Aorta (tissue), 5 donors: ENCODE measurements at regions of chr20 and their contacts with region 1.

Region 1: DNA sequence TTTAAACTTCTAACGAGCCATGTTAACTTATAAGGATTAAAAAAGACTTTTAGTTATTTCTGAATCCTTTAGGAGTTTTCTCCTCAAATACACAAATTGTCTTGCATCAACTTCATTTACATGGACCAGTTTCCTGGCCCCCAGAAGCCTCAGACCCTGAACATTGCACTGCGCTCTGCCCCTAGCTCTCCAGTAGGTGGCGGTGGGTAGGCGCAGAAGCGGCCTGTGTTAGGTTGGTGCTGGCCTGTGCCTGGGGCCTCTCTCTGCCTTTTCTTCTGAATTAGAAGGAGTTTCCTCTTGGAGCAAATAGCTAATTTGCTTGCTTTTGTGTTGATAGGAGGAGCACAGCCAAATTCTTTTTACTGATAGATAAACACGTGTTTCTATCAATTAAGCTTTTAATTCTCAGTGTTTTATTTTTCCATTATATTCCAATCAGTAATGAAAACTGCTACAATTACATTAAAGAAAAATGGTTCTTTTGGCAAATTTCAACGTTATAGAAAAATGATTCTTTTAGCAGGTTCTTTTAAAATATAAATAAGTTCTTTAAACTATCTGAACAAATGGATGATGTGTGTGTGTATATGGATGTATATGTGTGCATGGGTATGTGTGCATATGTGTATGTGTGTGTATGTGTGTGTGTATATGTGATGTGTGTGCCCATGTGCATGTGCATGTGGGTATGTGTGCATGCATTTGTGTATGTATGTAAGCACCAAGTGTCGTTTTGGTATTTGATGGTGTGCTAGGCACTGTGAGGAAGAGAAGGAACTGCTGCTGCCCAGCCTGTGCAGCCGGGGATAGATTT is 44.5 kb downstream of the DTD1 start:
- DNase-seq: peak; percentile 73 to 81
- ATAC-seq: peak; percentile 88
- H3K4me3 ChIP-seq: no peak overlapping the region
- H3K27ac ChIP-seq: no peak overlapping the region
- H3K4me1 ChIP-seq: no peaks in the 10 kb centered on the region
- H3K27me3 ChIP-seq: no peaks in the 10 kb centered on the region

Region 2: GRCh38 chr20:18705490-18705889 is 73.1 kb after region 1 on chr20:
- intact Hi-C with region 1: no loop called
- DNase-seq: no peak
- ATAC-seq: no peak
- H3K4me3 ChIP-seq: no peak overlapping the region
- H3K27ac ChIP-seq: no peak overlapping the region
- H3K4me1 ChIP-seq: no peaks in the 10 kb centered on the region
- H3K27me3 ChIP-seq: no peaks in the 10 kb centered on the region

Region 3: GRCh38 chr20:18728165-18728869 is 95.9 kb after region 1 on chr20:
- intact Hi-C with region 1: no loop called
- DNase-seq: no peak
- ATAC-seq: no peak
- H3K4me3 ChIP-seq: no peak overlapping the region
- H3K27ac ChIP-seq: no peak overlapping the region
- H3K4me1 ChIP-seq: no peaks in the 10 kb centered on the region
- H3K27me3 ChIP-seq: no peaks in the 10 kb centered on the region

Region 4: GRCh38 chr20:18793625-18794427 is 161.4 kb after region 1 on chr20:
- intact Hi-C with region 1: loop called (anchors 10 kb)
- DNase-seq: peak; percentile 94 to 95
- ATAC-seq: peak; percentile 95
- H3K4me3 ChIP-seq: peak overlapping the region; percentile 41 to 79
- H3K27ac ChIP-seq: peak overlapping the region; percentile 52 to 69
- H3K4me1 ChIP-seq: peaks cover 4 to 5% of the 10 kb centered on the region in 2 donors
- H3K27me3 ChIP-seq: no peaks in the 10 kb centered on the region

Region 5: GRCh38 chr20:18904624-18905023 is 272.2 kb after region 1 on chr20:
- intact Hi-C with region 1: loop called in 1 of 2 experiments (anchors 10 kb)
- DNase-seq: no peak
- ATAC-seq: no peak
- H3K4me3 ChIP-seq: no peak overlapping the region
- H3K27ac ChIP-seq: no peak overlapping the region
- H3K4me1 ChIP-seq: no peaks in the 10 kb centered on the region
- H3K27me3 ChIP-seq: no peaks in the 10 kb centered on the region

Region 6: GRCh38 chr20:19193349-19193748 is 560.9 kb after region 1 on chr20:
- intact Hi-C with region 1: loop called in 1 of 2 experiments (anchors 5 kb)
- DNase-seq: no peak
- ATAC-seq: no peak
- H3K4me3 ChIP-seq: no peak overlapping the region
- H3K27ac ChIP-seq: no peak overlapping the region
- H3K4me1 ChIP-seq: no peaks in the 10 kb centered on the region
- H3K27me3 ChIP-seq: no peaks in the 10 kb centered on the region

Region 7: DNA sequence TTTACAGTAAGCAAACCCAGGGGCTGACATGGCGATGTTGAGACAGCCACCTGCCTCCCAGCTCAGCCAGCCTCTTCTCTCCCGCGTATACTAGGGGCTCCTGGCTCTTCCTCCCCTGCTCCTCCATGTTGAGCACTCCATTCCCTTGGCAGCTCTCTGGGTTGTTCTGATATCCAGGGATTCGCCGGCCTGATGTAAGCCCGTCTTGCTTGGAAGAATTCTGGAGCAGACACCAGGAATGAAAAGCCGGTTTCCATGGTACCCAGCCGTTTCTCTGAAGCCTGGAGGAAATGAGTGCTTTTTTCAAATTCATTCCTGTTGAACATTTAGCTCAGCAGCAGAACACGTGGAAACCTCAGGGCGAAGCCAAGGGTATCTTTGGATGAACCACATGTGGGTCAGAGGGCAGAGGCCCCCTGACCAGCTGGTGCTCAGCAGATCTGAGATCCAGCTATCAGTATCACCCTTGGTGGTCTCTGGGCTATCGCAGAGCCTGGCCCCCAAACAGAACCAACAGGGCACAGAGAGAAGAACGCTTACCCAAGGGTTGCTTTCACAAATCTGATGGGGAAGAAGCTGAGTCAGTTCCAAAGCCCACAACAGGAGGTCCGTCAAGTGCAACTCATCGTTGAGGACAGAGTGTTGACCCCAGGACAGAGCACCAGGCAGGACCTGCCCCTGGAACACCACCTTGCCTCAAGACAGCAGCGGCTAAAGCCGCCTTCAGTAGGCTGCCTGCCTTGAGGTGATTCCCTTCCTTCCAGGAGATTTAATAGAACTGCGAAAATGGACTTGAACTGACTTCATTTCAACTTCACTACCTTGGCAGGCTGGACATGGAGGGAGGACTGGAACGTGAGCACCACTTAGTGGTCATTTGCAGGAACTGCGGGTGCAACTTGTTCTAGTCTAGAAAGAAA is 1029.6 kb after region 1 on chr20:
- intact Hi-C with region 1: loop called (anchors 10 kb)
- DNase-seq: peak in 1 of 2 donors; percentile 68
- ATAC-seq: peak; percentile 90
- H3K4me3 ChIP-seq: no peak overlapping the region
- H3K27ac ChIP-seq: no peak overlapping the region
- H3K4me1 ChIP-seq: peaks cover 0 to 3% of the 10 kb centered on the region in 2 donors
- H3K27me3 ChIP-seq: no peaks in the 10 kb centered on the region

Region 8: DNA sequence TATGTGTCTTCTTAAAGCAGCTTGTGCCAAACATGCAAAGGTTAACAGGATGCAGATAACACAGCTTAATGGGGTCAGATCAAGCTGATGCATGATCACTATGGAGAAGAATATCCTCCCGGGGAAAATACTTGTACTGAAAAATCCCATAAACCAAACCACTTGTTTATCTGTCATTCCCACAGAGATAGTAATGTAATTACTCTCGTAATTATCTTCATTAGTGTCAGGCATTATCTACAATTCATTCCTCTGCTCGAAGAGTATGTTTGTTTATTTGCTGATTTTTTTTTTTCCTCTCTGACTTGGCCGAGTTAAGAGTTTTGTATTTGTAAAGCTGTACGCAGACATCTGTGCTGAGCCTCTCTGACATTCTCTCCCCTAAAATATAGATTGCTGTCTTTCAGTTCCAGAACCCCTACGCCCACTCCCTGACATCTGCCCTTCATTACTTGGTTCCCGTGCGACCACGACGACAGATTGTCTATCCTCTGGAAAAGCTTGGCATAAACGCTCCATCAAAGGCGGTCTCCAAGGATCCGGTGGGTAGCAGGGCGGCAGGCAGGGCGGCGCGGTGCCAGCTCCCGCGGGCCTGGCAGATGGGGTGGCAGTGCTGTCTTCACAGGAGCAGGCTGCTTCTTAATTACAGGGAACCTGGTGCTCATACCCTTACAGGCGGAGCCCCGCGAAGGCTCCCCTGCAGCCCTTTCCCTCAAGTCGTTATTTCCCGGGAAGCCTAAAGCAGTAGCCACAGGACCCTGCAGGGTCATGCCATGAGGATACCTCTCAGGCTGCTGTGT is 1567.2 kb after region 1 on chr20:
- intact Hi-C with region 1: no loop called
- DNase-seq: no peak
- ATAC-seq: peak; percentile 37
- H3K4me3 ChIP-seq: no peak overlapping the region
- H3K27ac ChIP-seq: no peak overlapping the region
- H3K4me1 ChIP-seq: no peaks in the 10 kb centered on the region
- H3K27me3 ChIP-seq: no peaks in the 10 kb centered on the region